Activated CD4-positive, alpha-beta memory T cell treated with anti-CD3 and anti-CD28 coated beads for 36 hours (primary cell): ENCODE measurements at regions of chr4 and their contacts with region 1.

Region 1: DNA sequence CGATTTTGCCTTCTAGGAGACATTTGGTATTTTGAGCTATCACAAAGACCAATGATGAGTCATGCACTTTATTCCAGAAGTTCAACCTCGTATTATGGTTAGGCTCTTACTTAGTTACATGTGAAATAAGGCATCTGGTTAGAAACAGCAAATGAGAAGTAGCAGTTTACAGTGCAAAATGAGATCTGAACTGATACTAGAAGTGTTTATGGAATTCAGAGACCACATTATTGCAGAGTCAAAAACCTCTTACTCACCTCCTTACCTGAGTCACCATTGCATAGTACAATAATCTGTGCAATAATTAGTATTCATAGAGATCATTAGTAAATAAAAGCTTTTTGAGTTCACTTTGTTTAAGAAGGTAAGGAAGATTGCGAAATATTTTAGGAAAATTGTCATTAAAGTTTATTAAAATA is 38.7 kb downstream of the SEC24B start:
- DNase-seq: no peak
- H3K4me3 Mint-ChIP-seq: no peak overlapping the region
- H3K27ac Mint-ChIP-seq: no peak overlapping the region
- H3K4me1 Mint-ChIP-seq: peaks cover 57% of the 10 kb centered on the region
- H3K27me3 Mint-ChIP-seq: no peaks in the 10 kb centered on the region

Region 2: DNA sequence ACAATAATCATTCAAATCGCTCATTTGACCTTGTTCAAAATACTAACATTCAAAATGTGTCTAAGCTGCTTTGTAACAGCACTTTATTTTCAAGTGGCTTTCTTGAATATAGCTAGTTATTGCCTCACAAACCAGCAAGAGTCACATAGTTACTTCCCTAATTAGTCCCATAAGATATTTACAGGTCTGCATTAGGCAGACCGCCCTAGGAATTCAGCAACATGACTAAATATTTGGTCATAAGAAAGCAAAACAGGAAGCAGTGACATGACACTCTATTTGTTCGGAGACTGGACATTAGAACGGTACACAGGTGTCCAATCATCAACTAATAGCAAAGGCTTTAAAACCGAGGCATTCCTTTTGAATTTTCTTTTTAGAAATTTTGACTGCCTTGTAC is 431.9 kb before region 1 on chr4:
- CTCF ChIA-PET with region 1: no interaction called
- POLR2A ChIA-PET with region 1: no interaction called
- intact Hi-C with region 1: no loop called
- DNase-seq: no peak
- H3K4me3 Mint-ChIP-seq: no peak overlapping the region
- H3K27ac Mint-ChIP-seq: no peak overlapping the region
- H3K4me1 Mint-ChIP-seq: no peaks in the 10 kb centered on the region
- H3K27me3 Mint-ChIP-seq: peaks cover 4% of the 10 kb centered on the region

Region 3: GRCh38 chr4:109462297-109462696 is 10.1 kb before region 1 on chr4:
- CTCF ChIA-PET with region 1: no interaction called
- POLR2A ChIA-PET with region 1: no interaction called
- intact Hi-C with region 1: loop called (anchors 1 kb)
- DNase-seq: no peak
- H3K4me3 Mint-ChIP-seq: no peak overlapping the region
- H3K27ac Mint-ChIP-seq: no peak overlapping the region
- H3K4me1 Mint-ChIP-seq: peaks cover 21% of the 10 kb centered on the region
- H3K27me3 Mint-ChIP-seq: no peaks in the 10 kb centered on the region

Region 4: DNA sequence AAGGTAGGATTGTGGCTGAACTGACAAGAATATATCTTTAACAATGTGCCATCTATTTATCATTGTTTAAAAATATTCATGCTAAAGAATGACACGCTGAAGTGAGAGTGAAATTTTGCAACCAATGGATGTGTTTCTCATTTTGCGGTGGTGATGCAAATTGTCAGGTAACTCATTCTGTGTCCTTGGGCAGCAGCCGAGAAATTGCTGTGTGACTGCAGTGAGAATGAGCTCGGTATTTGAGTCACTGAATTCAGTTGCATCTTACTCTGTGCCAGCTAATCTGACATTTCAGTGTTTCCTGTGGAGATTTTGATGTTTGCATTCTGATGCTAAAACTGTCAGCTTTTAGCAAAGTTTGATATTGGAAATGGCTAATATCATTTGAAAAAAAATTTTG is 115.8 kb after region 1 on chr4:
- CTCF ChIA-PET with region 1: no interaction called
- POLR2A ChIA-PET with region 1: no interaction called
- intact Hi-C with region 1: no loop called
- DNase-seq: peak; percentile 81
- H3K4me3 Mint-ChIP-seq: no peak overlapping the region
- H3K27ac Mint-ChIP-seq: peak overlapping the region; percentile 58
- H3K4me1 Mint-ChIP-seq: peaks cover 64% of the 10 kb centered on the region
- H3K27me3 Mint-ChIP-seq: no peaks in the 10 kb centered on the region